ENCODE measurements at regions of chr16 and their contacts with region 1.

Region 1: DNA sequence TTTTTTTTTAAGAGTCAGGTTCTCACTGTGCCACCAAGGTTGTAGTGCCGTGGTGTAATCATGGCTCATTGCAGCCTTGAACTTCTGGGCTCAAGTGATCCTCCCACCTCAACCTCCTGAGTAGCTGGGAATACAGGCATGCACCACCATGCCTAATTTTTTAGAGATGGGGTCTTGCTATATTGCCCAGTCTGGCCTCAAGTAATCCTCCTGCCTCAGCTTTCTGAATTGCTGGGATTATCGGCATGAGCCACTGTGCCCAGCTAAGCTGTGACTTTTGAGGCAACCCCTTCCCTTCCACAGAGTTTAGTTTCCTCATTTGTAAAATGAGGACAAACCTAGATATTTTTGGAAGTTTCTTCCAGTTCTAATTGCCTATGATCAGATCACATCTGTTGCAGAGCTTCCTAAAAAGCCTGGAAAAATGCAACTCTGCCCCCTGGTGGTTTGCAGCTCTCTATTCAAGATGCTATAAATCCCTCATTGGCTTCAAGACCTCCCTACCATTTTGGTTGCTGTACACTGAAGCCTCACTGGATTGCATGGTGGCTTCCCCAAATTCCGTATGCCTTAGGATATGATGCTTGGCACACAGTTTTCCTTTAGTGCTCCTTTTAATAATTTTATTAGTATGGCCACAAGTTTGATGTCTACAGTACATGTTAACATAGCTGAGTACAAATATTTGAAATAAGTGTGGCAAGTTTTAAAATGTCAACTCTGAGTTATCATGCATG is 19.3 kb downstream of the GDE1 start:
- DNase-seq: peak; percentile 66

Region 2: GRCh38 chr16:19130852-19131810 is 371.4 kb before region 1 on chr16:
- CTCF ChIA-PET with region 1: no interaction called
- POLR2A ChIA-PET with region 1: no interaction called
- DNase-seq: no peak

Region 3: DNA sequence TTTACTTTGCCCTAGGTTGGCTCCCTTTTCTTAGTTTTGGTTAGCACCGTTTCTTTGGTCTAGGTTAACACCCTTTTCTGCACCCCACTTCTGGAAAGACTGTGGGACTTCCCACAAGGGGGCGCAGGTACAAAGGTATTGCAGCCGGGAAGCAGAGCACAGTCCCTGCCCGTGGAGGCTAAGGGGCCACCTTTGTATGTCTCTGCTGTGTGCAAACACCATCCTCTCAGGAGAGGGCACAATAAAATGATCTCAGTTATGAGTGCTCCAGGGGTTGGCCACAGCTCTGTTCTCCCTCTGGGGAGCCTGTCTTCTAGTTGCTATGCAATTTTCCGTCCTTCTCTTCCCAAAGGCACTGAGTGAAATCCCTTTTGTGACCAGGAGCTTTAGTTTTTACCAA is 113.3 kb before region 1 on chr16:
- CTCF ChIA-PET with region 1: interaction called, 21 read pairs
- POLR2A ChIA-PET with region 1: no interaction called
- DNase-seq: peak; percentile 35

Region 4: GRCh38 chr16:19513377-19514053 is 11.0 kb after region 1 on chr16:
- CTCF ChIA-PET with region 1: no interaction called
- POLR2A ChIA-PET with region 1: no interaction called
- DNase-seq: no peak